A549 (cell line): ENCODE measurements at regions of chr5 and their contacts with region 1.

Region 1: GRCh38 chr5:159444441-159445082 is 114.3 kb upstream of the IL12B start:
- DNase-seq: peak; percentile 77 to 78
- ATAC-seq: peak; percentile 76 to 86
- H3K4me3 ChIP-seq: no peak overlapping the region
- H3K27ac ChIP-seq: peak overlapping the region; percentile 62 to 66
- H3K4me1 ChIP-seq: peaks cover 28% of the 10 kb centered on the region
- CTCF ChIP-seq: peak; percentile 85
- EP300 ChIP-seq: no peak
- POLR2A ChIP-seq: no peak
- RAD21 ChIP-seq: peak; percentile 96 to 98

Region 2: DNA sequence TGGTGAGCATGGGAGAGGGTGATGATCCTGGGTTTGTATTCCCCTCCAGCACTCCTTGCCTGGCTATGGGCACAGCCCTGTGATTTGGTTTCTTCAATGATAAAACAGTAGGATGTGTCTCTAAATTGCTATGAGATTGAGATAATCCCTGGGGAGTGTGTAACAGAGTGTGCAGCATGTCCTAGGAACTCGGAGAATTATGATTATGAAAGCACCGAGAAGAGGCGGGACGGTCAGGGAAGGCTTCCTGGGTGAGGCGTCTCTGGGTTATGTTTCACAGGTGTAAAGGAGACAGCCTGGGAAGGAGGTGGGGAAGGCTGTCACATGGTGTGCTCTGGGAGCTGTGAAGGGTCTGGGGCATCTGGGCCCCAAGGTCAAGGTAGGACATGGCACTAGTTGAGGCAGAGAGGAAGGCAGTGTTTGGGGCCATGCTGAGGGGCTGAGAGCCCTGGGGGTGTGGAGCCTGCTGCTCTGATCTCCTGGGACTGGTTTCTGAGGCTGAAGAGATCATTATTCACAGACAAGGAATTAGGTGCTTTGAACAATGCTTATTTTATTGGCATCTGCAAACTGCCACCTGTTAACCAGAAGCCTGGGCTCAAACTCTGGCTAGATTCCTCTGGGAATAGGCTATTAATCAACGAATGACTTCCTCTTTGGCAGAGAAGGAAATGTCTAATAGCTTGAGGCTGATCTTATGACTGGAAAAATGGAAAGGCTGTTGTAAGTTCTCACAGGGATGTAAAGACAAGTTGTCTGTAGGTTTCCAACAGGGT is 40.5 kb before region 1 on chr5:
- CTCF ChIA-PET with region 1: no interaction called
- POLR2A ChIA-PET with region 1: no interaction called
- DNase-seq: no peak
- ATAC-seq: no peak
- H3K4me3 ChIP-seq: no peak overlapping the region
- H3K27ac ChIP-seq: no peak overlapping the region
- H3K4me1 ChIP-seq: no peaks in the 10 kb centered on the region
- CTCF ChIP-seq: no peak
- EP300 ChIP-seq: no peak
- POLR2A ChIP-seq: no peak
- RAD21 ChIP-seq: no peak

Region 3: DNA sequence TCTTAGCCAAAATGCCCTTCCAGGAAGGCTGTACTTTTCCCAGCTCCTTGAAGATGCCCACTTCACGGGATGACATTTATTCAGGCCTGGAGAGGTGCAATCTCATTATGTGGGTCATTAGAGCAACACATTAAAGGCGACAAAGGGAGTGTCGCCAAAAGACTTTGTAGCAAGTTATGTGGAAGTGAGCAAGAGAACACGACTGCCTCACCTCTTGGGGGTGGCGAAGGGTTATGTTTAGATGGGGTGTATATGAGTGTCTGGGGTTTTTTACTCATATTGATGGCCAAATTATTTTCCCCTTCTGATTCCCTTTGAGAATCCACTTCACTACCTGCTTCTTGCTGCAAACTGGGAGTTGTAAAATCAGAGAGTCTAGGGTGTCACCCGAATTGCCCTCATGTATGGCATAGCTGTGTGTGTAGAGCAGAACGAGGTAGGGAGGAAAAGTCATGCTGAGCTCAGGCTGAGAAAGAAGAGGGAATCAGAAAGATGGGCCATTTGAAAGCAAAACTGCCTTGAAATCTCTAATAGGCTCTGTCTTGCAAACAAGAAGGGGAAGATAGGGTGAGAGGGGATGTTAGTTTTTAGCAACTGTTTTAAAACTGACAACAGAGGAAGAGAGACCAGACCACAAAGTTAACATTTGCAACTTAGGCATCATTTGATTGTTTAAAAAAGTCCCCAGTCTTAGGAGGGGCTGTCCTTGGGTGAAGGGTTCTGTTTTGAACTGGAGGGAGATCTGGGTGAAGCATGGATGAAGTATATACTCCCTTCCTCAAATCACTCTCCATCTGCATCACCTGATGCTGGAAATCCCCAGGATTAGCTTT is 17.2 kb before region 1 on chr5:
- CTCF ChIA-PET with region 1: interaction called, 15 read pairs
- POLR2A ChIA-PET with region 1: no interaction called
- DNase-seq: no peak
- ATAC-seq: no peak; a peak in 1 of 6 replicates
- H3K4me3 ChIP-seq: no peak overlapping the region
- H3K27ac ChIP-seq: no peak overlapping the region
- H3K4me1 ChIP-seq: no peaks in the 10 kb centered on the region
- CTCF ChIP-seq: no peak
- EP300 ChIP-seq: no peak
- POLR2A ChIP-seq: no peak
- RAD21 ChIP-seq: no peak

Region 4: DNA sequence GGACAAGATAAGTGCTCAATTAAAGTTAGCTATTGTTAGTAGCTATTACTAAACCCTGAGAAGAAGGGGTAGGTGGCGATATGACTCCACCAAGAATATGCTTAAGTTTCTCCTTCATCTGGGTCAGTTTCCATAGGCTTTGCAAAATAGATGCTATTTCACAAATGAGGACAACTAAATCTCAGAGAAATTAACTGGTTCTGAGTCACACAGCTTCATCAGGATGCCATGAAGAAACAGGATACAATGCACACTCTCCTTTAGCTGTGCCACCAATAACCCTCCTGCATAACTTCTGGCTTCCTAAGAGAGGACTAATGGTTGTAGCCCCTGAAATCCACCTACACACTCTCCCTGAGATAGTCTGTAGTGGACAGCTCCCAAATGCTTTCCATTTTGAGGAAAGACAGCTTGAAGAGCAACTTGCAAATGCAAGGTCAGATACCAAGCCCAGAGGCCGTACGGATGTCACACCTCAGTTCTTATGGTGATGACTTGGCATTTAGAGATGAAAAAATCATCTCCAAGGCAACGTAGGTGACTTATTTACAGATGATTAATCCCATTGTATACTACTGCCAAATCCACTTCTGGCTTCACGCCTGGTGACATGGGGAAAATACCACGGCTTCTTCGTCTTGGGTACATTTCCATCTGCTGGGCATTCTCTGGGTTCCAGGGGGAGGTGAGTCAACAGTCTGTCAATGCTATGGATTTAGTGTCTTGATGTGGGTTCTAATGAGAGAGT is 137.1 kb after region 1 on chr5:
- CTCF ChIA-PET with region 1: interaction called, 20 read pairs
- POLR2A ChIA-PET with region 1: no interaction called
- DNase-seq: peak; percentile 77 to 97
- ATAC-seq: peak; percentile 86 to 88
- H3K4me3 ChIP-seq: no peak overlapping the region
- H3K27ac ChIP-seq: peak overlapping the region; percentile 74 to 87
- H3K4me1 ChIP-seq: peaks cover 66% of the 10 kb centered on the region
- CTCF ChIP-seq: peak; percentile 52
- EP300 ChIP-seq: peak; percentile 77 to 84; a peak in 3 of 5 replicates
- POLR2A ChIP-seq: no peak
- RAD21 ChIP-seq: peak; percentile 58 to 67

Region 5: DNA sequence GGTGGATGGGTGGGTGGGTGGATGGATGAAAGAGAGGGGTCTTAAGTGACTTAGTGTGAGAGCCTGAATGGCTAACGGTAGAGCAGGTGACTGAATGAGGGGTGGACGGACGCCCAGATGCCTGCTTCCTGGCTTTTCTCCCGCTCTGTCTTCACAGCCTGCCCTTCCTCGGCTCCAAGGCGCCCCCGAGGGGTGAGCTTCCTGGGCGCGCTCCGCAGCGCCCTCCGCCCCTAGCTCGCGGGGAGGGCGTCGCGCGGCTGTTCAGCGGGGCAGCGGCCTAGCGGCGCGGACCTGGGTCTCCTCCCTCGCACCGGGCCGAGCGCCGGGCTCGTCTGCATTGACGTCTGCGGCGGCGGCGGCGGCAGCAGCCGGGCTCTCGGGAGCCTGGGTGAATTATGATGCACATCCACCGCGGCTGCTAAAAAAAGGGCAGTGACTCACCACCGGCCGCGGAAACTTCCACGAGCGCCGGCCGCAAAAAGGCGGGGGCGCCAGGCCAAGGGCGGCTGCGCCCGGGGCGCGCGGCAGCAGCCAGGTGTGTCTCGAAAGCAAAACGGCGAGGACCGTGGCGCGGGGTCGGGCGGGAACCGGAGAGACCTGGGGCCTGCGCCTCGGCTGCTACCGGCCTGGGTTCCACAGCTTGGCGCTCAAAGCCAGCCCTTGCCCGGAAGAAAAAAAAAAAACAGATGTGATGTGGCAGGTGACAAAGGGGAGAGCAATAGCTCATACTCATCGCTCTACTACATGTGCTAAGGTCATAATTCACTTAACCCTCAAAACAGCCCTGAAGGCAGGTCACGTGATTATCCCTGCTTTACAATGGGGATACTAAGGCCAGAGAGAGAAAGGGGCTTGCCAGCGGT is 328.7 kb after region 1 on chr5:
- CTCF ChIA-PET with region 1: interaction called, 19 read pairs
- POLR2A ChIA-PET with region 1: no interaction called
- DNase-seq: peak; percentile 67 to 76
- ATAC-seq: peak; percentile 94 to 97
- H3K4me3 ChIP-seq: peak overlapping the region; percentile 41
- H3K27ac ChIP-seq: peak overlapping the region; percentile 90 to 94
- H3K4me1 ChIP-seq: peaks cover 13% of the 10 kb centered on the region
- CTCF ChIP-seq: peak; percentile 73
- EP300 ChIP-seq: no peak; a peak in 1 of 5 replicates
- POLR2A ChIP-seq: peak; percentile 19; the same call in 1 of the 2 replicates
- RAD21 ChIP-seq: peak; percentile 62 to 86

Region 6: DNA sequence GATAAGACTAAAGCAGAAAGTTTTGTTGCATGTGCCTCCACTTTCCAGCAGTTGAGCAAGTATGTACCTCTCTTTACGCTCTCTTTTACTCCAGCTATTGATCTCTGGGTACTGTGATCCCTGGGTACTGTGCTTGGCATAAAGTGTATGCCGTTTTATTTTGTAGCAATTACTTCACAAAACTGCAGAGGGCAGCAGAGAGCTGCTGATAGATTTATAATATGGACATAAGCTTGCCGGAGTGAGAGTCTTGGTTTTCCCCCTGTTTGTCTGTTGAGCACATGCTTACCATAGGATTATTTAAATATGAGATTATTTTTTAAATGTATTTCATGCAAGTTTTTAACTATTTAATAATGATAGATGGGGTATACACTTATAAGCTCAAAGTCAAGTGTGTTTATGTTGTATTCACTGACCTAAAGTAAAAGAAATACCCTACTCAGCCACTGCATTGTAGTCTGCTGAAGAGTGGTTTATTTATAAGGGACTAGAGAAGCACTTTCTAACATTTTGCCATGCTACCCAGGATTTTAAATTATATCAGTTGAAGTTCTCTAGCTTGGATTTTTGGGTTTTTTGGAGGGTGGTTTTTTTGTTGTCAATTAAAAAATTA is 577.4 kb after region 1 on chr5:
- CTCF ChIA-PET with region 1: interaction called, 12 read pairs
- POLR2A ChIA-PET with region 1: no interaction called
- DNase-seq: peak; percentile 58 to 61
- ATAC-seq: peak; percentile 93 to 97
- H3K4me3 ChIP-seq: no peak overlapping the region
- H3K27ac ChIP-seq: no peak overlapping the region
- H3K4me1 ChIP-seq: no peaks in the 10 kb centered on the region
- CTCF ChIP-seq: peak; percentile 80
- EP300 ChIP-seq: no peak
- POLR2A ChIP-seq: no peak
- RAD21 ChIP-seq: peak; percentile 77 to 81